ENCODE measurements at regions of chr14 and their contacts with region 1.

Region 1: DNA sequence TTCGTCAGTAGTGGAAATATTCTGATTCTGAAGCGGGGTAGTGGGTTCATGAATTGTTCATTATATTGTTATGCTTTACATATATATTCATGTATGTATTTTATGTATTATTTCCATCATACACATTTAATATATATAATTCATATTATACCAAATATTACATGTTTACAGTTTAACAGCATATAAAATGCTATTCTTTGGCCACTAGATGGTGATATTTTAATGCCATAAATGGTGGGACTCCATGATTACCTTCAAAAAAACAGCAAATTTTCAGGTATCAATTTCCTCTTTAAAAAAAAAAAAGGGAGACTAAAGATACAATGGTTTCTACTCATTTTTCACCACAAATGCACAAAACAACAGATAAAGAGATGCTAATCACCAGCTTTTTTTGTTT is 41.0 kb downstream of the BDKRB1 start:
- DNase-seq: peak; percentile 54
- H3K4me3 ChIP-seq: no peak overlapping the region
- H3K27ac ChIP-seq: no peak overlapping the region
- H3K4me1 ChIP-seq: no peaks in the 10 kb centered on the region
- CTCF ChIP-seq: peak; percentile 82

Region 2: DNA sequence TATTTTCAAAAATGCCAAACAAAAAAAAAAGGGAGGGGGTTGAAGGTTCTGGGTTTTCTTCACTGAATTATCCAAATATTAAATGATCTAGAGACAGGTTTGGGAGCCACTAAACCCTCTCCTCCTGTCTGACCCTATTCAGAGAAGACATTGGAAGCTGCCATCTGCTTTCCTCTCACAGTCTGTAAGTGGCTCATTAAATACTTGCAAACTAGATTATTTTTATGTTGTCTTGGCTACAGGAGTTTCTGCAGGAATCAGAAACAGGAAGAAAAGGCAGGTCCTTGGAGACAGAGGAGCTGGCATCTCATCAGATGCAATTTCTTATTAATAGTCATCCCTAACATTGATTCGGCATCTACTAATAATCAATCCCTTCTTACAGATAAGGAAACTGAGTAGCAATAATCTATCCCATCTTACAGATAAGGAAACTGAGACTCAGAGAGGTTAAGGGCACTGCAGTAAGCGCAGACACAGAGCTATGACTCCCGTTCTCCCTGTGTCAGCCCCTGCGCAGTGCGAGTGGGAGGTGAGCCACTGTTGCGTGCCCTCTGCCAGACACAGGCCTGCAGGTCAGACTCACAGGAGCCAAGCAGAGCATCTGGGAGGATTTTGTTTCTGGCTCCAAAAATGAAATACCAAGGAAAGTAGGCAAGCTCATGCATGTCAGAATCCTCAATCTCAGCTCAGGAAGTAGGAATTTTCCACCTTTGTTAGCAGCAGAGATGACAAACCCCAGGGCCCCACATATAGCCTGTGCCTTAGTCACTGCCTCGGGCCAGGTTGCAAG is 81.4 kb before region 1 on chr14:
- CTCF ChIA-PET with region 1: no interaction called
- POLR2A ChIA-PET with region 1: no interaction called
- intact Hi-C with region 1: no loop called
- DNase-seq: no peak
- H3K4me3 ChIP-seq: no peak overlapping the region
- H3K27ac ChIP-seq: no peak overlapping the region
- H3K4me1 ChIP-seq: no peaks in the 10 kb centered on the region
- CTCF ChIP-seq: no peak

Region 3: DNA sequence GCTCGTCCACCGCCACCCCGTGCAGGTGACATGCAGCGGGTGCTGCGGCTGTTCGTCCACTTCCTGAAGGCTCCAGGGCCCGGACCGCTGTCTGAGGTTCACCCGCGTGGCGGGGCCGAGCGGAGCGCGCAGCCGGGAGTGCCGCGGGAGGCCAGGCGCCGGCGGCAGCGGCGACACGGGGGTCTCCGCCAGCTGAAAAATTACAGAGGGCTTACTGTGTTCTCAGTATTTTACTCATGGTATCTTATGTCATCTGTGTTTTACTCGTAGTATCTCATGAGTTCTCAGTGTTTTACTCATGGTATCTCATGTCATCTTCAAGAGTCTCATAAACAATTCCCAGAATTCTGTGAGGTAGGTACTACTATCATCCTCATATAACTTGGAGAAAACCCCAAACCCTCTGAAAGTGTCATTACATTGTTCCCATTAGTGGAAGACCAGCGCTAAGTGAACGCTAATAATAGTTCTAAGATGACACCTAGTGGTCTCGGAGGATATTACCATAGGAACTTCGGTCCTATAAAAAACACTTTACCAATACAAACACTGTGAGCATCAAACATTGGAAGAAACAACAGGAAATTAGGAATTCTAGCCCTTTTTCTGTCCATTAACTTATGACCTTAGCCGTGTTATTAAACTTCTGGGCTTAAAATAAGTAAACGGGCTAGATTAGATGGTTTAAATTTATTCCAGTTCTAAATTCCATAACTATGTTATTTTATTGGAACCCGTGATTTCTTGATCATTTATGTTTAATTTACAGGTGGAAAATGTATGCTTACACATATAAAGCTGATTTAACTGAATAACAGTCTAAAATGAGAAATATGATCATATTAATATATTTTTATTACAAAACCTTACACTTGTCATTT is 127.3 kb after region 1 on chr14:
- CTCF ChIA-PET with region 1: no interaction called
- POLR2A ChIA-PET with region 1: no interaction called
- intact Hi-C with region 1: loop called (anchors 1 kb)
- DNase-seq: peak; percentile 78
- H3K4me3 ChIP-seq: peak overlapping the region; percentile 35
- H3K27ac ChIP-seq: no peak overlapping the region
- H3K4me1 ChIP-seq: peaks cover 5% of the 10 kb centered on the region
- CTCF ChIP-seq: peak; percentile 97